Dorsolateral prefrontal cortex (tissue), 120 donors: ENCODE measurements at regions of chr6 and their contacts with region 1.

Region 1: DNA sequence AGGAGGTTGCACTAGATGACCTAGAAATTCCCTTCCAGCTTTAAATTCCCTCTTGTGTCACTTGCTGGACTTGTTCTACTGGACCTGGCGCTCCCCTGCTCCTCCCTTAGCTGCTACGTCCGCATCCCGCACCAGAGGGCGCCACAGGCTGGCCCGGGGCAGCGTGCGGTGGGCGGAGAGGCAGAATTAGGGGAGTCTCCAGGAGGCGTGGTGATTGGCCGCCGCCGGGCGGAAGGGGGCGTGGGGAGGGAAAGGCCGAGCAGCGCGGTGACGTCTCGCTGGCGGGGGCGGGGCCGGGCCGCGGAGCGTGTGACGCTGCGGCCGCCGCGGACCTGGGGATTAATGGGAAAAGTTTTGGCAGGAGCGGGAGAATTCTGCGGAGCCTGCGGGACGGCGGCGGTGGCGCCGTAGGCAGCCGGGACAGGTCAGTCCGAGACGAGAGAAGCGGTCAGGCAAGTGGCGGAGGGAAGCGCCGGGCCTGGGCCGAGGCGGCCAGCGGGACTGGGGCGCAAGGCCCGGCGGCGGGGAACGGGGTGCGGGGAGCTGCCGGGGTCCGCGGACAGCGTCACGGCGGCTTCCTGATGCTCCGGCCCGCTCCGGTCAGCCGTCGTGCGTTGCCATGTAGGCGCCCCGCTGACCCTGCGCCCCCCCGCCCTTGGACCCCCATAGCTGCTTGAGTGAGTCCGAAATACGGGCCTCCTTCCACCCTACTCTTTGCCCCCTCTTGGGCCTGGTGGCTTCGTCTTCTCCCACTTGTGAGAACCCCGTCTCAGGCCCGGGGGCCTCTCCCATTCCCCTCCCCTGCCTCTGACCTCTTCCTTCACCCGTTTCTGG is at the start of gene PPARD:
- DNase-seq: peak; percentile 96 to 100 (median 98)
- H3K4me3 ChIP-seq: peak within 1 kb of the TSS; percentile 70 to 99 (median 92)
- H3K27ac ChIP-seq: peak within 1 kb of the TSS in 57 of 59 donors; percentile 40 to 97 (median 87)
- H3K27me3 ChIP-seq: no peaks in the 10 kb centered on the region
- CTCF ChIP-seq: peak; percentile 90 to 100 (median 99)
- total RNA-seq, gene PPARD: 26.8 to 49.1 (median 36.9) TPM

Region 2: DNA sequence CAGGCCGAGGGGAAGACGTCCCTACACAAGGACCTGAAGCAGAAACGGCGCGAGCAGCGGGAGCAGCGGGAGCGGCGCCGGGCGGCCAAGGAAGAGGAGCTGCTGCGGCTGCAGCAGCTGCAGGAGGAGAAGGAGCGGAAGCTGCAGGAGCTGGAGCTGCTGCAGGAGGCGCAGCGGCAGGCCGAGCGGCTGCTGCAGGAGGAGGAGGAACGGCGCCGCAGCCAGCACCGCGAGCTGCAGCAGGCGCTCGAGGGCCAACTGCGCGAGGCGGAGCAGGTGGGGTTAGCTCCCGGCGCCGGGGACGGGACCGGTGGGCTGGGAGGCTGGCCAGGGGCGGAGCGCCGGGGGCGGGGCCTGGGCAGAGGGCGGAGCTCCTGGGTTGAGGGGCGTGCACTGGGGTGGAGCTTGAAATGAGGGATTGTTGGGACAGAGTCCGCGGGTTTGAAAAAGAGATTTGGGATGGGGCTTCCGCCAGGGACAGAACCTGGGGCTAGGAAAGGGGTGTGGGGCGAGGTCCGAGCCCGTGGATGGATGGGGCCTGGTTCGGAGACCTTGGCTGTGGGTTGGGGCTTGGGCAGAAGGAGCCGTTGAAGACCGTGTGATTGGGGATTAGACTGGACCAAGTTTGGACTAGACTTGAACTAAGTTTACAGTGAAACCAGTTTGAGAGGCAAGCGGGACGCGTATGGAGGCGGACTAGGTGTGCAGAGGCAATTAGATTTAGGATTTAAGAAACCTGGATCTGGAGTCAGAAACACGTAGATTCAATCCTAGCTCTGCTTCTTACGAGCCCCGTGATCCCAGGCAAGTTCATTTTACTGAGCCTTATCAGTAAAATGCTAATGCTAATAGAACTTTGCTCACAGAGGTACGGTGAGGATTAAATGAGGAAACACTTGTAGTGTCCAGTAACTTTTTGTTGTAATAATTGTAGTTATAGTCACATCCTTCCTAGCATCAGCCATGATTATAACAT is 24.0 kb before region 1 on chr6:
- intact Hi-C with region 1: no loop called
- DNase-seq: peak; percentile 60 to 91 (median 80)
- H3K4me3 ChIP-seq: peak overlapping the region; percentile 42 to 84 (median 71)
- H3K27ac ChIP-seq: peak overlapping the region in 39 of 59 donors; percentile 3 to 84 (median 60)
- H3K27me3 ChIP-seq: no peaks in the 10 kb centered on the region
- CTCF ChIP-seq: peak in 21 of 56 donors; percentile 8 to 42 (median 21)

Region 3: GRCh38 chr6:35452186-35453090 is 110.0 kb after region 1 on chr6 and contains the start of gene FANCE:
- intact Hi-C with region 1: loop called (anchors 1 kb)
- DNase-seq: peak; percentile 86 to 94 (median 90)
- H3K4me3 ChIP-seq: peak within 1 kb of the TSS; percentile 52 to 86 (median 73)
- H3K27ac ChIP-seq: peak within 1 kb of the TSS in 44 of 59 donors; percentile 1 to 85 (median 66)
- H3K27me3 ChIP-seq: no peaks in the 10 kb centered on the region
- CTCF ChIP-seq: peak in 30 of 56 donors; percentile 11 to 55 (median 31)
- total RNA-seq, gene FANCE: 1.8 to 5.5 (median 3.2) TPM